Transverse colon (tissue), 4 donors: ENCODE measurements at regions of chr6 and their contacts with region 1.

Region 1: DNA sequence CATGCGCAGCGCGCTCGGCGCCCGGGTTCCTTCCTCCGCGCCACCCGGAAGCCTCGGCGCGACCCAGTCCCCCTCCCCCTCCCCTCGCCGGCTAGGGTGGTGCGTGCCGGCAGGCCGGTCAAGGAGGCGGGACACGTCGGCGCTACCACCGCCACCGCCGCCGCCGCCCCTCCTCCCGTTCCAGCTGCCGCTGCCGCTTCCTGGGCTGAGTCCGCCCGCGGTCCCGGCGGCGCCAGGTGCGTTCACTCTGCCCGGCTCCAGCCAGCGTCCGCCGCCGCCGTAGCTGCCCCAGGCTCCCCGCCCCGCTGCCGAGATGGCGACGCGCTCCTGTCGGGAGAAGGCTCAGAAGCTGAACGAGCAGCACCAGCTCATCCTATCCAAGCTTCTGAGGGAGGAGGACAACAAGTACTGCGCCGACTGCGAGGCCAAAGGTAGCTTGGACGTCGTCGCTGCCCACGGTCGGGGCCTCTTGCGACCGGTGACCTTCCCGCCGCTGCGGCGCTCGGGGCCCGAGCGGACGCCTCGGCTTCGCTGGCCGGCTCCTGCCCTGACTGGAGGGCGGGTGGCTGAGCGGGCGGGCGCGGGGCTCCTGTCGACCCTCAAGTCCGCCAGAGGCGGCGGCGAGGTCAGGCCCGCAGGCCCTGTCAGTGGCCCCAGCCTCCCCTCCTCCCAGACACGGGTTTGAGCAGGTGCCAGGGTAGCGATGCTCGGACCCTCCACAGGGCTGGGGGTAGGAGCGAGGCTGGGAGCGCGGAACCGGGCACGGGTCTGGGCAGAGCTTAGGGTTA is at the start of gene SMAP1:
- DNase-seq: peak; percentile 97
- H3K4me3 ChIP-seq: peak within 1 kb of the TSS; percentile 65 to 91 (median 75)
- H3K27ac ChIP-seq: peak within 1 kb of the TSS; percentile 90 to 98 (median 94)
- H3K4me1 ChIP-seq: peaks cover 5 to 51% (median 29%) of the 10 kb centered on the region in 4 donors
- H3K27me3 ChIP-seq: no peaks in the 10 kb centered on the region
- CTCF ChIP-seq: no peak
- EP300 ChIP-seq: peak; percentile 6
- POLR2A ChIP-seq: peak; percentile 91
- total RNA-seq, gene SMAP1: 10.3 to 49.3 (median 35.3) TPM

Region 2: DNA sequence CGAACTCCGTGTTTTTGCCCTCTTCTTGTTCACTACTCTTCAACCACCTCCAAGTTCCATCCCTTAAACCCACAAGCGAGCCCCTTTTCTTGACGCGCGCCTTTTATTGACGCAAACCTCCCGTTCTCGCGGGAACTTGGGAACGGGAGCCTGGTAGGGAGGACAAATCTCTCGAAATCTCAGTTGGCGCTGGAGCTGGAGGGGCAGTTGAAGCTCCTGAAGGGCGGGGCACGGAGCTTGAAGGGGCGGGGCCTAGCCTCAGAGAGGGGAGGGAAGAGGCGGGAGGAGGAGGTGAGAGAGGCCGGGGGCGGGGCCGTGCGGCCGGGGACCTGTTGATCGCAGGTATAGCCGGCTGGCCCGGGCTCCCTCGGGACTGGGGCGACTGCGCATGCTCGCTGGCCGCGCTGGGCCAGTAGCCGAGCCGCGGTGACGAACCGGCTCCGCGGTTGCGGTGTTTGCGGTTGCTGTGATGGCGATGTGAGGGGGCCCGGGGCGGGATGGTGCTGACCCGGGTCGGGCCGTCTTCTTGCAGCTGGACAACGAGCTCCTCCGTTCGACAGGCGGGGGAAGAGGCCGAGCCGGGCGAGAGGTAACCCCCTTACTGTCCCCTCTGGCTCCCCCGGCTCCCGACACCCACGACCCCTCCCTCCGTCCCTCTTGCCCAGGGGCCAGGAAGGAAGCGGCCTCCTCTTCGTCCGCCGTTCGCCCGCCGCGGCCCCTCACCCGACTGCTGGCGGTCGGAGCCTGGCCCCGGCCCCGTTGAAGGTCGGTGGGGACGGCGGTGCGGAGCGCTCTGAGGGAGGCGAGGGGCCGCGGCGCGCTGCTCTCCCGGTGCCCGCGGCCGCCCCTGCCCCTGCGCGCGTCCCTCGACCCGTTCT is 254.6 kb before region 1 on chr6 and contains the start of gene FAM135A:
- in situ Hi-C with region 1: loop called in 1 of 4 experiments (anchors 25 kb)
- intact Hi-C with region 1: no loop called
- DNase-seq: peak; percentile 99
- H3K4me3 ChIP-seq: peak within 1 kb of the TSS; percentile 70 to 90 (median 80)
- H3K27ac ChIP-seq: peak within 1 kb of the TSS; percentile 90 to 94 (median 92)
- H3K4me1 ChIP-seq: peaks cover 11 to 48% (median 30%) of the 10 kb centered on the region in 4 donors
- H3K27me3 ChIP-seq: no peaks in the 10 kb centered on the region
- CTCF ChIP-seq: no peak
- EP300 ChIP-seq: no peak
- POLR2A ChIP-seq: peak; percentile 85
- total RNA-seq, gene FAM135A: 38.9 to 115 (median 65.7) TPM